CD4-positive, alpha-beta memory T cell (primary cell): ENCODE measurements at regions of chr1 and their contacts with region 1.

Region 1: GRCh38 chr1:156860113-156860627 is 495 bp upstream of the NTRK1 start:
- DNase-seq: peak in 4 of 5 donors; percentile 49 to 64 (median 52)
- H3K4me3 ChIP-seq: peak overlapping the region; percentile 49 to 63
- H3K4me3 Mint-ChIP-seq: peak overlapping the region; percentile 73 to 87 (median 84)
- H3K27ac ChIP-seq: no peak overlapping the region
- H3K27ac Mint-ChIP-seq: peak overlapping the region in 6 of 7 donors; percentile 20 to 86 (median 66)
- H3K4me1 ChIP-seq: peaks cover 29% of the 10 kb centered on the region
- H3K4me1 Mint-ChIP-seq: peaks cover 8 to 45% (median 26%) of the 10 kb centered on the region in 4 donors
- H3K27me3 ChIP-seq: peaks cover 16% of the 10 kb centered on the region
- H3K27me3 Mint-ChIP-seq: peaks cover 31 to 37% of the 10 kb centered on the region in 2 donors

Region 2: DNA sequence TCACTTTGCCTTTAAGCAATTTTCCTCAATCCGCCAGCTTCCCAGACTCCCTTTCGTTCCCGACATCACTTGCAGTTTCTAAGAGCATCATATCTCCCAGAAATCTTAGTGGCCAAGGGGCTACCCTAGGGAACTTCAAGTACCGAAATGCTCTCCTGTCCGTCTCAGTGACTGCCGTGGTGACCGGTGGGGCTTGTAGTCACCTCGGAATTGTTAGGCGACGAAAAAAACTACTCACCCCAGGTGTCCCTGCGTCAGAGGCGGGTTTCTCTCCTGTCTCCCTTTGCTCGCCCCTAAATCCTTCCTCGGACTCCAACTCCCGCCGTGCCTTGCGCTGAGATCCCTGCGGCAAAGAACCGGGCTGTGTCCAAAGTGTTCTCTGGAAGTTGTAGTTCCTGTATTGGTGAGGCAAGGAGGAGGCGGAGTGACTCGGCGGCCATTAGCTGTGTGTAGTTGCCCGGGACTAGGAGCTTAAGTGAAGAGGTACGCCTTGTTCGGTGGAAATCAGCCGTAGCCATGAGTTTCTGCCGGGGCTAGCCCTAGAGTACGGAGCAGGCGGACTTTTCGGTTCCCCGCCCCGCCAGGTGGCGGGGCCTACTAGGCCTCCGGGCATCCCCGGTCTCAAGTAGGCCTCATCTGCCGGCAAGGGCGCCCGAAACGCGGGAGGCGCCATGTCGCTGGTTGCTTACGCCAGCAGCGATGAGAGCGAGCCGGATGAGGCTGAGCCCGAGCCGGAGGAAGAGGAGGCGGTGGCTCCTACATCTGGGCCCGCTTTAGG is 92.9 kb before region 1 on chr1 and contains the start of gene PRCC:
- CTCF ChIA-PET with region 1: interaction called, 9 read pairs
- POLR2A ChIA-PET with region 1: interaction called, 6 read pairs
- intact Hi-C with region 1: loop called (anchors 1 kb)
- DNase-seq: peak; percentile 97 to 100 (median 99)
- H3K4me3 ChIP-seq: peak within 1 kb of the TSS; percentile 98 to 99
- H3K4me3 Mint-ChIP-seq: no peak within 1 kb of the TSS
- H3K27ac ChIP-seq: peak within 1 kb of the TSS; percentile 98
- H3K27ac Mint-ChIP-seq: no peak within 1 kb of the TSS
- H3K4me1 ChIP-seq: peaks cover 48% of the 10 kb centered on the region
- H3K4me1 Mint-ChIP-seq: peaks cover 24 to 39% (median 34%) of the 10 kb centered on the region in 4 donors
- H3K27me3 ChIP-seq: no peaks in the 10 kb centered on the region
- H3K27me3 Mint-ChIP-seq: no peaks in the 10 kb centered on the region
- total RNA-seq, gene PRCC: 60.9 to 61.3 TPM

Region 3: GRCh38 chr1:156797212-156797871 is 62.8 kb before region 1 on chr1:
- CTCF ChIA-PET with region 1: interaction called, 344 read pairs
- POLR2A ChIA-PET with region 1: interaction called, 66 read pairs
- intact Hi-C with region 1: loop called (anchors 1 kb)
- DNase-seq: peak; percentile 66 to 75 (median 74)
- H3K4me3 ChIP-seq: no peak overlapping the region
- H3K4me3 Mint-ChIP-seq: no peak overlapping the region
- H3K27ac ChIP-seq: no peak overlapping the region
- H3K27ac Mint-ChIP-seq: peak overlapping the region in 6 of 7 donors; percentile 12 to 45 (median 24)
- H3K4me1 ChIP-seq: peaks cover 17% of the 10 kb centered on the region
- H3K4me1 Mint-ChIP-seq: peaks cover 18 to 30% (median 21%) of the 10 kb centered on the region in 4 donors
- H3K27me3 ChIP-seq: no peaks in the 10 kb centered on the region
- H3K27me3 Mint-ChIP-seq: no peaks in the 10 kb centered on the region

Region 4: DNA sequence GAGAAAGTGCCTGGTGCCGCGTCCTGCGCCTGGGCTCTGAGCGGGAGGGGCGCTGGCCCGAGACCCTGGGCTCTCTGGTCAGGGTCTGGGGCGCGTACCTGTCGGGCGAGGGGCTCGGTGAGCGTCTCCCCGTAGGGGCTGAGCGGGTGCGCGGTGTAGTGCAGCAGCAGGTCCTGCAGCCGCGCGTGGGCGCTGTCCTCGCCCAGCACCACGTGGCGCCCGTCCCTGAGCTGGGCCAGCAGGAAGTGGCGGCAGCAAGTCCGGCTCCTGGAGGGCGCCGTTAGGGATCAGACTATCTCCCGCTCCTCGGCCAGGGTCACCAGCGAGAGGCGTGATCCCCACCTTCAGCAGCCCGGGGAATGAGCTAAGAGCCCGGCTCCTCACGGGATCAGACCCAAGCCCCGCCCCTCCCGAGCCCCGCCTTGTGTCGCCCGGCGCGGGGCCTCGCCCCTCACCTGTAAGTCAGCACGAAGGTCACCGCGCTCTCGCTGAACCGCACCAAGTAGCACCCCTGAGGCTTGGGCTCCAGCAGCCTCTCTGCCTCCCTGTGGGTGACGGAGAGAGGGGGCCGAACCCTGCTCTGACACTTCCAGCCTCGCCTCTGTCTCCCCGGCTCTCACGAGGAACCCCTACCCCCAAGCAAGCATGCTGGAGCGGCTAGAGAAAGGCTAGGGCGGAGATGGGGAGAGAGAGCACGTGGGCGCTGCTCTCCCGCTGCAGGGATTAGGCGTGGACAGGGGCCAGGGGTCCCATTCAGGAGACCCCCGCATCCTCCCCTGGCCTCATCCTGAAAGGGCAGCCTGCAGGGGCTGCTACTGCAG is 46.2 kb before region 1 on chr1:
- CTCF ChIA-PET with region 1: interaction called, 56 read pairs
- POLR2A ChIA-PET with region 1: interaction called, 16 read pairs
- intact Hi-C with region 1: loop called (anchors 1 kb)
- DNase-seq: peak; percentile 79 to 91 (median 83)
- H3K4me3 ChIP-seq: peak overlapping the region; percentile 73 to 97
- H3K4me3 Mint-ChIP-seq: peak overlapping the region; percentile 92 to 95 (median 94)
- H3K27ac ChIP-seq: peak overlapping the region; percentile 100
- H3K27ac Mint-ChIP-seq: peak overlapping the region; percentile 99 to 100 (median 100)
- H3K4me1 ChIP-seq: peaks cover 80% of the 10 kb centered on the region
- H3K4me1 Mint-ChIP-seq: peaks cover 47 to 78% (median 63%) of the 10 kb centered on the region in 4 donors
- H3K27me3 ChIP-seq: no peaks in the 10 kb centered on the region
- H3K27me3 Mint-ChIP-seq: peaks cover 0 to 5% of the 10 kb centered on the region in 2 donors

Region 5: DNA sequence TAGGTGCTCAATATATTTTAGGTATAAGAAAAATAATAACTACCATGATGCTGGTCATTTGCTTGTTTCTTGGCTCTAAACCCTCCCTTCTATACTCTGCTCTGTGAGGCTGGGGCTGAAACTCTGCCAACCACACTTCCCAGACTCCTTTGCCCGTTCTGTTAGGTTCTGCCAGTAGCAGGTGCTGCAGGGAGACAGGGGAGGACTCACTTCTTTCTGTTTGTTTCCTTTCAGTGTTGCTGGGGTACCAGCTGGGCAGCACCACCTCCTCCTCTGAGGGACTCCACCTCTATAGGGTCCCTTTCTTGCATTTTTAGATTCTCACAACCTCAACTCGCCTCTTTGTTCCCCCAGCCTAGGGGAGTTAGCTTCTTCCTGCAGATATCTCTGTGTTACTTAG is 26.6 kb before region 1 on chr1:
- CTCF ChIA-PET with region 1: interaction called, 204 read pairs
- POLR2A ChIA-PET with region 1: interaction called, 19 read pairs
- intact Hi-C with region 1: no loop called
- DNase-seq: no peak
- H3K4me3 ChIP-seq: no peak overlapping the region
- H3K4me3 Mint-ChIP-seq: no peak overlapping the region
- H3K27ac ChIP-seq: no peak overlapping the region
- H3K27ac Mint-ChIP-seq: peak overlapping the region in 4 of 7 donors; percentile 13 to 43 (median 26)
- H3K4me1 ChIP-seq: peaks cover 12% of the 10 kb centered on the region
- H3K4me1 Mint-ChIP-seq: peaks cover 3 to 20% (median 11%) of the 10 kb centered on the region in 4 donors
- H3K27me3 ChIP-seq: no peaks in the 10 kb centered on the region
- H3K27me3 Mint-ChIP-seq: peaks cover 2 to 20% of the 10 kb centered on the region in 2 donors